ENCODE measurements at regions of chr12 and their contacts with region 1.

Region 1: DNA sequence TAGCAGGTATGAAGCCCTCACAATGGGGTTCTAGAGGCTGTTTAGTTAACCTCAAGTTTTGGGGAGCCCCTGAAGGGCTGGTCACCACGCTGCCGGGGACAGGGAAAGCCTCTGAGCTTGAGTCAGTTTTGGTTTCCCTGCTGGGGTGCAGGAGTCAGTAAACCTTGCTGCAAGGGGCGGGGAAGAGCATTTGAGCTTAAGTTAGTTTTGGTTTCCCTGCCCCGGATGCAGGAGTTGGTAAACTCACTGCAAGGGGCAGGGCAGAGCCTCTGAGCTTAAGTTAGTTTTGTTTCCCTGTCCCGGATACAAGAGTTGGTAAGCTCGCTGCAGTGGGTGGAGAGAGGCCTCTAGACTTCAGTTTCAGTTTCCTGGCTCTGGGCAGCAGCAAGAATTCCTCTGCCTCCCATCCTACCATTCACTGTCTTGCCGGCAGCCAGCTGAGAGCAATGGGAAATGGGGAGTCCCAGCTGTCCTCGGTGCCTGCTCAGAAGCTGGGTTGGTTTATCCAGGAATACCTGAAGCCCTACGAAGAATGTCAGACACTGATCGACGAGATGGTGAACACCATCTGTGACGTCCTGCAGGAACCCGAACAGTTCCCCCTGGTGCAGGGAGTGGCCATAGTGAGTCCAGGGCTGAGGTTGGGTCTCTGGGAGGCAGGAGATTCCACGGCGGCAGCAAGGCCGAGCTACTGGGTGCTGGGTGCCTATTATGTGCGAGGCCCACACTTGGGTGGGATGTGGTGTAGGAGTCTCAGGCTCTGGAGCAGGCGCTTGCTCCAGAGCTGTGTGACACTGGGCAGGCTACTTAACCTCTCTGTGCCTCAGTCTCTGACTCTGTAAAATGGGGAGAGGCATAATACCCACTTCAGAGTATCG is at the start of gene OAS2:
- H3K4me3 Mint-ChIP-seq: peak within 1 kb of the TSS; percentile 92
- H3K27ac Mint-ChIP-seq: peak within 1 kb of the TSS; percentile 99
- H3K4me1 Mint-ChIP-seq: peaks cover 66% of the 10 kb centered on the region
- H3K27me3 Mint-ChIP-seq: no peaks in the 10 kb centered on the region

Region 2: DNA sequence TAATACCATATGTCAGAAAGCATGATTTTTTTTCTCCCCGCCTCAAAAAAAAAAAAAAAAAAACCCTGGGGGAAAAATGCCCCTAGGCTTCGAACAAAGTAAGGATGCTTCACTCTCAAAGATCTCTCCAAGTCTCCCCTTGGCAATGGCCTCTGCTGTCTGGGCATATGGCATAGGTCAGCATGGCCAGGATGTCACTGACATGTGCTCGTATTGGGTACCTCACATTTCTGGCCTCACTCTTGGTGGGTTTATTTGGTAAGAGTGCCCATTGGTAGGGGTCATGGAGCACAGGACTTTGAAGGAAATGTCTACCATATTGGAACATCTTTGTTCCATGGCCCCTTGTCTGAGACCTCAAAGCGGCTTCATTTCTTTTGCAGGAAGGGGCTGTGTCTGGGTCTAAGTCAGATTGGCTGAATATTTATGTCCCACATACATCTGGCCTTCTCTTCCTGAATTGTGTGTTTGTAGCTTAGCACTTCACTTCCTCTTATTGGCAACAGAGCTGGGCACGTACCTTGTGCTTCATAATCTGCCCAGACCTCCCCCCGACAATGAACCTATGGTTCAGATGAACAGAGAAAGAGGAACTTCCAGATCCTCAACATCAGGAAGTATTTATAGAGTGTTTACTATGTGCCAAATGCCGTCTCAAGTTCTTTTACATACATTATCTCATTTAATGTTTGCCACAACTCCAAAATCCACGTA is 108.0 kb before region 1 on chr12:
- intact Hi-C with region 1: no loop called
- H3K4me3 Mint-ChIP-seq: no peak overlapping the region
- H3K27ac Mint-ChIP-seq: no peak overlapping the region
- H3K4me1 Mint-ChIP-seq: peaks cover 14% of the 10 kb centered on the region
- H3K27me3 Mint-ChIP-seq: peaks cover 51% of the 10 kb centered on the region

Region 3: DNA sequence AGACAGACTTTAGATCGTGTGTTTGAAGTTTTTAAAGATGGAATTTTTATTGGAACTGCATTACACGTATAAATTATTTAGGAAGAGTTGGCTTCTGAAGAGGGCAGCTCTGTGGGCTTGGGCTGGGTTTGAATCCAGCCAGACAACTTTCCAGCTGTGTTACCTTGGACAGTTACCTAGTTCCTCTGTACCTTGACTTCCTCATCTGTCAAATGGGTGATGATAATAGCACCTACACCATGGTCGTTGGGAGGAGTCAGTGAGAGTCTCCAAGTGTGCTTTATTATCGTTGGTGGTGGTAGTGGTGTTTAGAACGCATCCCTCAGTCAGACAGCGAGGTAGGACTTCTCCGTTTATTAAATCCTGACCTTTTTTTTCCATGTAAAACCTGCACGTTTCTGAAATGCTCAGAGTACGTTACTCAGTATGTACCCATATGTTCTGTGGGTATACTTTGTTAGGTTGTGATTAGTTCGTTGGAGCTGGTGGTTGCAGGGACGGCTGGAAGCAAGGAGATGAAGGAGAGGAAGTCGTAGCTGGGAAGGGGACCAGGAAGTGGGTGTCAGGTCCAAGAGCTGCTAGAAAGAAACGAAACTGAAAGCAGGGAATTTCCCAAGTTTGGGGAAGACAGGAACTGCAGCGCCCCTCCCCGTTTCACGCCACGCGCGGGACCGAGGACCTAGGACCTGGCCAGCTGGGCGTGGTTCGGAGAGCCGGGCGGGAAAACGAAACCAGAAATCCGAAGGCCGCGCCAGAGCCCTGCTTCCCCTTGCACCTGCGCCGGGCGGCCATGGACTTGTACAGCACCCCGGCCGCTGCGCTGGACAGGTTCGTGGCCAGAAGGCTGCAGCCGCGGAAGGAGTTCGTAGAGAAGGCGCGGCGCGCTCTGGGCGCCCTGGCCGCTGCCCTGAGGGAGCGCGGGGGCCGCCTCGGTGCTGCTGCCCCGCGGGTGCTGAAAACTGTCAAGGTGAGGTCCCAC is 40.4 kb before region 1 on chr12 and contains the start of gene OAS3:
- intact Hi-C with region 1: loop called (anchors 5 kb)
- H3K4me3 Mint-ChIP-seq: peak within 1 kb of the TSS; percentile 85
- H3K27ac Mint-ChIP-seq: peak within 1 kb of the TSS; percentile 87
- H3K4me1 Mint-ChIP-seq: peaks cover 28% of the 10 kb centered on the region
- H3K27me3 Mint-ChIP-seq: peaks cover 4% of the 10 kb centered on the region

Measured in dendritic cell treated with granulocyte-macrophage colony-stimulating factor and Interleukin-4, amounts not matched to agents 40 ng/mL and 50 ng/mL, for 4 days (primary cell).